ENCODE measurements at regions of chr6 and their contacts with region 1.

Region 1: DNA sequence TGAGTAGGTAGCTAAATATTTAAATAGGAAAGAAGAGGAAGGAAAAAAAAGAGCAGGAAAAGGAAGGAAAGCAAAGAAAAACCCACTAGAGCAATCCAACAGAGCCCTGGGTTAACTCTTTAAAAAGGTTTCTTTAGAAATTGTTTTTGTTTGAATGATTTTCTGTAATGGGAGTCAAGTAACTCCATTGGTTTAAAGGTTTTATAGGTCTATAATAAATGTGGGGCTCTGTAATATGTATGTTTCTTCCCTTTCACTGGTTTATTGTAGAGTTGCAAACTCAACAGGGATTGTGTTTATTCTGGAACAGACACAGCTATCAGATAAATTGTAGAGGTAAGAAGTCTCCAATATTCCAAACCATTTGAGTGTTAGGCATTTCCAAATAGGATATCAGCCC is 10.9 kb downstream of the PLEKHG1 start:
- DNase-seq: no peak
- H3K4me3 Mint-ChIP-seq: no peak overlapping the region
- H3K27ac Mint-ChIP-seq: no peak overlapping the region
- H3K4me1 Mint-ChIP-seq: no peaks in the 10 kb centered on the region
- H3K27me3 Mint-ChIP-seq: no peaks in the 10 kb centered on the region
- CTCF ChIP-seq: no peak

Region 2: DNA sequence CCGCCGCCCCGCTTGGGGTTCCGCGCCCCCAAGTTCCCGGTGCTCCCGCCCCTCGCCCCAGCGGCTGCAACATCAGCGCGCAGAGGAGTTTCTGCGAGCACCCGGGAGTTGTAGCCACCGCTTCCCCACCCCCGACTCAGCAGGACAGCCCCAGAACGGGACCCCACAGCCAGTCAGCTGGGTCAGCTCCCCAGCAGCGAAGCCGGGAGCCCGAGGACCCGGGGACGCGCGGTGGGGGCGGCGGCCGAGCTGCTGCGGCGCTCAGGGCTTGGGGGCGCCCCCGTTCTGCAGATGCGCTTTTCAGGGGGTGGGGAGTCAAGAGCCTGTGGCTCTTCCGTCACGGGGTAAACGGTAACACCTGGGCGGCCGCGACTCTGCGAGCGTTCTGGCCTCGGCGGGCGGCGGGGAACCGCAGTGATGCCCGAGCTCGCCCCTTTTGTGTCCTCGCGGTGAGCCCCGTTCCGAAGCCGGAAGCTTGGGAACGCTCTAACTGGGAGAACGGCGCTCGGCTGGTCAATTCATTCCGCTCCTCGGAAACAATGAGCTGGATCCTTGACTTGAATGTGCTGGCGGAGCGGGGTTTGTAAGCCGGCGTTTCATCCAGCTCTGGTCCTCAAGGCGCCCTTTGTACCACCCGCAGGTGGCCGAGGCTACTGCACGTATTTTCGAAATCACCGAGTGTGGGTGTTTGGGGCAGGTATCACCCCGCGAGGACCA is 10.1 kb before region 1 on chr6:
- CTCF ChIA-PET with region 1: interaction called, 11 read pairs
- POLR2A ChIA-PET with region 1: interaction called, 4 read pairs
- intact Hi-C with region 1: no loop called
- DNase-seq: peak; percentile 80
- H3K4me3 Mint-ChIP-seq: peak overlapping the region; percentile 85
- H3K27ac Mint-ChIP-seq: no peak overlapping the region
- H3K4me1 Mint-ChIP-seq: no peaks in the 10 kb centered on the region
- H3K27me3 Mint-ChIP-seq: no peaks in the 10 kb centered on the region
- CTCF ChIP-seq: peak; percentile 49

Measured in MCF 10A (cell line).